ENCODE measurements at regions of chr4 and their contacts with region 1.

Region 1: DNA sequence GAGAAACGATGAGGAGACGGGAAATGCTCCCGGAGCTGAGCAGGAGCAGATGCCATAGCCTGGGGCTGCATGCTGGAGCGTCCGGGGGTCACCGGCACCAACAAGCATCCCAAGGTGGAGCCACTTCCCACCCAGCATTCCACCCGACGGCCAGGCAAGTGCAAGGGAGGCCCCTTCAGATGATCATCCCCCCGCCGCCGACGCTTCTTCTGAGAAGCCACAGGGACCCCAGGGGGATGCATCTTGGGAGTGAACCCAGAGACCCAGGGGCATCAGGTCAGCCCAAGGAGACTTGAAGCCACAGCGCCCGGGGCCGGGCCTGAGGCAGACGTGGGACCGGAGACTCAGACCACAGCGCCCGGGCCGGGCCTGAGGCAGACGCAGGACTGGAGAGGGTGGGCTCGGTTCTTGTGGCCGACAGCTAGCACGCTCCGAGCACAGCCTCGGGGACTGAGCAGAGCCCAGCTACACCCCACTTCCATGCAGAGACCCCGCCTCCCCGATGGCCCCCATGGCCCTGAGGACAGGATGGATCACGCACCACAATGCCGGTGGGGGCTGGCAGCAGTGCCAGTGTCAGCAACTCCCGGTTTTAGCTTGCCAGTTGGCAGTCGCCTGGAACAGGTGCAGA is 33.0 kb upstream of the CPLX1 start:
- DNase-seq: no peak
- H3K4me3 ChIP-seq: no peak overlapping the region
- H3K27ac ChIP-seq: no peak overlapping the region
- H3K4me1 ChIP-seq: no peaks in the 10 kb centered on the region
- H3K27me3 ChIP-seq: no peaks in the 10 kb centered on the region
- CTCF ChIP-seq: no peak
- POLR2A ChIP-seq: no peak

Region 2: GRCh38 chr4:833156-833555 is 25.8 kb before region 1 on chr4:
- intact Hi-C with region 1: loop called (anchors 1 kb)
- DNase-seq: no peak
- H3K4me3 ChIP-seq: no peak overlapping the region
- H3K27ac ChIP-seq: no peak overlapping the region
- H3K4me1 ChIP-seq: no peaks in the 10 kb centered on the region
- H3K27me3 ChIP-seq: peaks cover 0 to 19% of the 10 kb centered on the region in 2 donors
- CTCF ChIP-seq: no peak
- POLR2A ChIP-seq: no peak

Region 3: DNA sequence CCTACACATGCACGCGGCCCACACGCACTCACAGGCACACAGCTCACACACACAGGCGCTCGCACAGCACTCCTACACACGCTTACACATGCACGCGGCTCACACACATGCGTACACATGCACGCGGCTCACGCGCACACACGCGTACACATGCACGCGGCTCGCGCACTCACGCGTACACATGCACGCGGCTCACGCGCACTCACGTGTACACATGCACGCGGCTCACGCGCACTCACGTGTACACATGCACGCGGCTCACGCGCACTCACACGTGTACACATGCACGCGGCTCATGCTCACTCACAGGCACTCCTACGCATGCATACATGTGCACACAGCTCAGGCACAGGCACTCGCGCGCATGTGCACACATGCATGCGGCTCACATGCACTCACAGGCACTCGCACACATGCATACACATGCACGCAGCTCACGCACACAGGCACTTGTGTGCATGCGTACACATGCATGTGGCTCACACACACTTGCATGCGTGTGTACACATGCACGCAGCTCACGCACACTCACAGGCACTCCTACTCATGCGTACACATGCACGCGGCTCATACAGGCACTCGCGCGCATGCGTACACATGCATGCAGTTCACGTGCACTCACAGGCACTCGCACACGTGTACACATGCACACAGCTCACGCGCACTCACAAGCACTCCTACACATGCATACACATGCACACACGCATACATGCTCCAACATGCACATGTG is 28.3 kb after region 1 on chr4:
- intact Hi-C with region 1: loop called (anchors 1 kb)
- DNase-seq: no peak
- H3K4me3 ChIP-seq: no peak overlapping the region
- H3K27ac ChIP-seq: no peak overlapping the region
- H3K4me1 ChIP-seq: no peaks in the 10 kb centered on the region
- H3K27me3 ChIP-seq: no peaks in the 10 kb centered on the region
- CTCF ChIP-seq: no peak
- POLR2A ChIP-seq: no peak

Region 4: DNA sequence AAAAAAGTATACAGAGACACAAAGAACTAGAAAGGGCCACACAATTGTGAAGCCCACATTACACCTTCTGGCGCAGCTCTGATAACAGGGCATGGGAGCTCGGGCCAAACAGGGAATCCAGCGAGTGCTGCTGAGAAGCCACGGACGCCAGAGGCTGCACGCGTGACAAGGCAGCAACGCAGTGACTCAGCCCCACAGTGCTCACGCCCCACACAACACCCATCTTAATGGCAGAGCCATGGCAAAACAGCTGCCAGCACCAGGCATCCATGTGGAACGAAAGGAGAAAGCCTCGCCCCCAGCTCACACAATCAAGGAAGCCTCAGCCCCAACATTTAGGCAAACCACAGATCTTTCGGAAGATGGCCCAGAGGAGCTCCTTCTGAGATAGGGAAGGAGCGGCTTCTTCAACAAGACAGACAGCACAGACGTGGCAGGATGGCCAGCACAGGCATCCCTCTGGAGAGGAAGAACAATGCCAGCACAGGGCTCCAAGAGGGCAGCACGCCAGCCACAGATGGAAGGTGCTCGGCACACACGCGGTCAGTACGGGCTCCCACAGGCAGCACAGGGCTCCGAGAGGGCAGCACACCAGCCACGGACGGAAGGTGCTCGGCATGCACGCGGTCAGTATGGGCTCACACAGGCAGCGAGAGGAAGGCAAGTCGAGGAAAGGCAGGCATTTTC is 40.1 kb after region 1 on chr4:
- intact Hi-C with region 1: no loop called
- DNase-seq: no peak
- H3K4me3 ChIP-seq: no peak overlapping the region
- H3K27ac ChIP-seq: no peak overlapping the region
- H3K4me1 ChIP-seq: no peaks in the 10 kb centered on the region
- H3K27me3 ChIP-seq: no peaks in the 10 kb centered on the region
- CTCF ChIP-seq: no peak
- POLR2A ChIP-seq: no peak

Measured in breast epithelium (tissue), 4 donors.